ENCODE measurements at regions of chr1 and their contacts with region 1.

Region 1: GRCh38 chr1:159071970-159072582 is 4.5 kb downstream of the AIM2 start:
- DNase-seq: no peak
- H3K4me3 Mint-ChIP-seq: no peak overlapping the region
- H3K27ac Mint-ChIP-seq: no peak overlapping the region
- H3K4me1 Mint-ChIP-seq: peaks cover 34% of the 10 kb centered on the region
- H3K27me3 Mint-ChIP-seq: no peaks in the 10 kb centered on the region

Region 2: GRCh38 chr1:158117854-158118704 is 954.0 kb before region 1 on chr1:
- CTCF ChIA-PET with region 1: interaction called, 3 read pairs
- intact Hi-C with region 1: loop called (anchors 10 kb)
- DNase-seq: peak; percentile 40
- H3K4me3 Mint-ChIP-seq: peak overlapping the region; percentile 16
- H3K27ac Mint-ChIP-seq: no peak overlapping the region
- H3K4me1 Mint-ChIP-seq: peaks cover 10% of the 10 kb centered on the region
- H3K27me3 Mint-ChIP-seq: peaks cover 51% of the 10 kb centered on the region

Region 3: DNA sequence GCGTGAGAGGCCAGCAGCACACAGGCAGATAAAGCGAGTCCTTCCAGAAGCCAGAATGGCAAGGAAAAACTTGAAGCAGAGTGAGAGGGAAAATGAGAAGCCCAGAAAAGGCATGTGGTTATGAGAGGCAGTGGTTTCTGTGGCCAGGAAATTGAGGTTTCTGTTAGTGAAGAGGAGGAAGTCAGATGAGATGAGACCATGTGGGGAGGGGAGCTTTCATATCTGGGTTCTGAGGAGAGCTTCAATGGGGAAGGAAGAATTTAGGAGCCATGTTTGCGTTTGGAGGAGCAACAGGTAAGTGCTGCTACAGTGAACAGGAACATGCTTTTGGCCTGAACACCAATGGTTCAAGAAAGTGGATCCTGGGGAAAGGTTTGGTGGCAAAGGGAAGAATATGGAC is 824.0 kb before region 1 on chr1:
- CTCF ChIA-PET with region 1: no interaction called
- intact Hi-C with region 1: loop called (anchors 5 kb)
- DNase-seq: peak; percentile 55
- H3K4me3 Mint-ChIP-seq: no peak overlapping the region
- H3K27ac Mint-ChIP-seq: no peak overlapping the region
- H3K4me1 Mint-ChIP-seq: peaks cover 19% of the 10 kb centered on the region
- H3K27me3 Mint-ChIP-seq: peaks cover 45% of the 10 kb centered on the region

Region 4: DNA sequence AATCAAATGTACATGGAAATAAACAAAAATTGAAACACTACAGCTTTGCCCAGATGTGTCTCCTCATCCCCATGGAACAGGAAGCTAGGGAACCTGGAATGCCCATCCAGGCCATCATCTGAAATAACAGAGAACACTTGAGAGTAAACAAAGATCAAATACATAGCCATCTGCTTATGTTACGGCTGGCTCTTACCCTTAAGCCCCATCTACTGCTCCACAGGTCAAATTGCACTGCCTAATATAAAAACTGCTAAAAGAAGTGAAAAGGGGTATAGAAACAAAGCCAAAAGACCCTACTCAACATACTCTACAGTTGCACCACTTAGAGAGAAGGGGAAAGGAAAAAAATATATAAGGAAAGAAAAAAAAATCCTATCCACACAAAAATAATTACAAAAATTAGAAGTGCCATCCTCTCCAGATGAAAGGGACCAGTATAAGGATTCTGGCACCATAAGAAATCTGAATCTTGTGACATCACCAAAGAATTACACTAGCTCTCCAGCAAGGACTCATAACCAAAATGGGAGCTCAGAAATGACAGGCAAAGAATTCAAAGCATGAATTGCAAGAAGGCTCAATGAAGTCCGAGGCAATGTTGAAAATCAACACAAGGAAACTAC is 544.8 kb before region 1 on chr1:
- CTCF ChIA-PET with region 1: no interaction called
- intact Hi-C with region 1: loop called (anchors 5 kb)
- DNase-seq: no peak
- H3K4me3 Mint-ChIP-seq: no peak overlapping the region
- H3K27ac Mint-ChIP-seq: no peak overlapping the region
- H3K4me1 Mint-ChIP-seq: no peaks in the 10 kb centered on the region
- H3K27me3 Mint-ChIP-seq: peaks cover 31% of the 10 kb centered on the region

Region 5: DNA sequence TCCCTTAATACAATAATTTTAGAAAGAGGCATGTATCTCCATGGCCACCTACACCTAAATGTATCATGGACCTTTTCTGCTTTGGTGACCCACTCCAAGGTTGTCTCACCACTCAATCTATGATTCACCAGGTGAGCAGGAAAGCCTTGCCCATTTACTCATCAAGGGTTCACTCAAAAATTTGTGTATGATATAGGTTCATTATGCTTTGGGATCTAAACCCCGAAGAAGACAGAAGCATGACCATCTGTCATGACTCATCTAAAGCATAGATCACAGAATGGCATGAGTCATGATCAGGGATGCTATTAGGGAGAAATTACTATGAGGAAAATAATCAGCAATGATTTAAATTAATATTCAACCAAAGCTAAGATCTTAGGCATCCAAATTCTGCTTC is 102.2 kb before region 1 on chr1:
- CTCF ChIA-PET with region 1: interaction called, 3 read pairs
- intact Hi-C with region 1: loop called (anchors 1 kb)
- DNase-seq: peak; percentile 30
- H3K4me3 Mint-ChIP-seq: no peak overlapping the region
- H3K27ac Mint-ChIP-seq: peak overlapping the region; percentile 89
- H3K4me1 Mint-ChIP-seq: peaks cover 35% of the 10 kb centered on the region
- H3K27me3 Mint-ChIP-seq: peaks cover 5% of the 10 kb centered on the region

Region 6: DNA sequence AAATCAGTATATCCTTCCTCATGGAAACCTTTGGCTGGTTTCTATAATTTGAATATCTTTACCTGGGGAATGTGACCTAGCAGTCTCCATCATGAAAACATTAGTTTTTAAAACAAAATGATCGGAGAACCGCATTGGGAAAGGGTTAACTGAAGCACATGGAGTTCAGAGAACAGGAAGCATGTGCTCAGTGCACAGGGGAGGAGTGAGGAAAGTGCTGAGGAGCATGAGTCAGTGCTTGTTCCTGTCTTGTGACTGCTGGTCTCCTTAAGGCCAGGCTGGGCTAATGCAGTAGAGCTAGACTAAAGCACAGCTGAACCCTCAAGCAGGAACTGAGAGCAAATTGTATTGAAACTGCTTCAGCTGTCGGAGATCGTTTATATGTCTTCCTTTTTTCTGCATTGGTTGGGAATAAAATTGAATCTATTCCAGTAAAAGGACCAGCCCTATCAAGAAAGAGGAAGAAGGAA is 56.6 kb before region 1 on chr1:
- CTCF ChIA-PET with region 1: interaction called, 5 read pairs
- intact Hi-C with region 1: loop called (anchors 1 kb)
- DNase-seq: peak; percentile 84
- H3K4me3 Mint-ChIP-seq: peak overlapping the region; percentile 91
- H3K27ac Mint-ChIP-seq: peak overlapping the region; percentile 99
- H3K4me1 Mint-ChIP-seq: peaks cover 42% of the 10 kb centered on the region
- H3K27me3 Mint-ChIP-seq: no peaks in the 10 kb centered on the region

Region 7: GRCh38 chr1:159098596-159098995 is 26.5 kb after region 1 on chr1:
- CTCF ChIA-PET with region 1: no interaction called
- intact Hi-C with region 1: no loop called
- DNase-seq: no peak
- H3K4me3 Mint-ChIP-seq: no peak overlapping the region
- H3K27ac Mint-ChIP-seq: no peak overlapping the region
- H3K4me1 Mint-ChIP-seq: no peaks in the 10 kb centered on the region
- H3K27me3 Mint-ChIP-seq: peaks cover 16% of the 10 kb centered on the region